PC-3 (cell line): ENCODE measurements at regions of chr2 and their contacts with region 1.

Region 1: DNA sequence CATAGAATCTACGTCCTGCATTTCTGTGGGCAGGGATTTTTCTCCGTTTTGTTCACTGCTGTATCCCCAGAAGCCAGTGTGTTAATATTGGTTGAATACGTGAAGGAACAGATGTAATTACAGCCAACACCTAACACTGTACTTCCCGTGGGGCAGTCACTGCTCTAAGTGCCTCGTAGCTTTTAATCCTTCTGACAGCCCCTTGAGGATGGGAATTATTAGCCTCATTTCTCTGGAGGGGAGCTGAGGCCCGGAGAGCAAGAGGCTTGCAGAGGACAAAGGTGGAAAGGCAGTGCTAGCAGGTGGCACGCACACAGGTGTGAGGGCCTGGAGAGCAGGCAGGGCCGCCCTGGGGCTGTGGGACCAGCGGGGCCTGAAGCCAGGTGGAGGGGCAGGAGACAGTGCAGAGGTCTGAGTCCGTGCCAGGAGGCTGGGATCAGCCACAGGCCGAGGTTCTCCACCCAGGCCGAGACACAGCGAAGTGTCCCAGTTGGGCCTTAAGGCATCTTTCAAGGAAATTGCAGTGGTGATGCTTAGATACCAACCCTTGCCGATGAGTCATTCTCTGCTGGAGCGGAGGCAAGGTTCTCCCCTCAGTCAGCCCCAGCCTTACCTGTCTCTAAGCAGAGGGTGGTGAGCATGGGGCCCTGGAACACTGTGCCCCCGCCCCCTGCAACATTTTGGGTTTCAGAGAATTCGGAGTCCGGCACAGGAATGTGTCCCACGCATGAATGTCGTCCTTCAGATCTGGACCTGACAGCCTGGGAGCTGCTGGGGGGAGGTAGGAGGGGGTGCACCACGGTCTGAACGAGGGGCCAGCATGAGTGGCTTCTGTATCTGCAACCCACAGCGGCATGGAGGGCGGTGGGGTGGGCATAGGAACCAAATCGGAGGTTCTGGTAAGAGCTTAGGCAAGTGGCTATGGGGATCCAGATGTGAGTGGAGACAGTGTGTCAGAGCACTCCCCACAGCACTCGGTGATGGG is 122.6 kb downstream of the GBX2 start:
- DNase-seq: peak; percentile 83
- ATAC-seq: peak; percentile 75
- H3K4me3 ChIP-seq: no peak overlapping the region
- H3K27ac ChIP-seq: peak overlapping the region; percentile 74
- H3K4me1 ChIP-seq: peaks cover 30% of the 10 kb centered on the region
- H3K27me3 ChIP-seq: no peaks in the 10 kb centered on the region
- CTCF ChIP-seq: no peak

Region 2: DNA sequence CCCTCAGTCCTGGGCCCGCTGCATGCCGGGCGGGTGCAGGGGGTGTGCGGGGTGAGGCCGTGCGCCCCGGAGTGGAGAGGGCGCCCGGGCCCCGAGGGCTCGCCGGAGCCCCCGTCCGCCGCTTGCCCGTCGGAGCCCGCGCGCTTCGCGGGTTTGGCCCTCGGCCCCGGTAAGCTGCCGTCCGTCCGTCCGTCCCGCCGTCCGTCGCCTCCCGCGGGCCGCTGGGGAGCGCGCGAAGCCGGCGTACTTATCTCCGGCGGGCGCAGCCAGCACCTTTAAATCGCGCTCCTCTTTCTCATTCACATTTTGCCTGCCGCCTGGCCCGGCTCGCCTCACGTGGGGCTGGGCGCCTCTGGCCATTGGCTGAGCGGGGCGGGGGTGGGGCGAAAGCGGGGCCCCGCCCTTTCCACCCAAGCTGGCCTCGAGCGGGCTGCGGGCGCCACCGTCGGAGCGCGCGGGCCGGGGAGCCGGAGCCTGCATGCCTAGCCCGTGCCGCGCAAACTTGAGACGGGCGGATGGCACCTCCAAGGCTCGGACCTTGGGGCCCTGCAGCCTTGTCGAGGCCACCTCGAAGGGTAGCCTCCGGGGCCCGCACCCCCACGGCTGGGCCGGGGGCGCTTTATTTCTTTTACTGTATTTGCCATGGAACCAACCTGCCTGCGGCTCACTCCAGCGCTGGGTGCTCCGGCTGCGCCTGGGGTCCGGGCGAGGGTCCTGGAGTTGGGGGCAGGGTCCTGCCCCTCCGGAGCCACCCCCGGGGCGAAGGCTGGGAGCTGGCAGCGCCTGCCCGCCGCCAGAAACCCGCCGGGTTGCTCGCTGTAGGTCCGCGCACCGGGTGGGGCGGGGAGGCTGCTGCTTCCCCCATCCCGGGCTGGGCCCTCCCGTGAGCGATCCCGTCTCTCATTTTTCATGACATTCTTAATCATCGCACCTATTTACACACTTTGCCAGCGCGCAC is 122.8 kb after region 1 on chr2 and contains the start of gene GBX2:
- CTCF ChIA-PET with region 1: no interaction called
- POLR2A ChIA-PET with region 1: no interaction called
- intact Hi-C with region 1: loop called (anchors 5 kb)
- DNase-seq: peak; percentile 91
- ATAC-seq: peak; percentile 78
- H3K4me3 ChIP-seq: peak within 1 kb of the TSS; percentile 91
- H3K27ac ChIP-seq: no peak within 1 kb of the TSS
- H3K4me1 ChIP-seq: peaks cover 10% of the 10 kb centered on the region
- H3K27me3 ChIP-seq: no peaks in the 10 kb centered on the region
- CTCF ChIP-seq: no peak
- total RNA-seq, gene GBX2: 30.5 and 40.5 TPM in 2 replicates